ENCODE measurements at regions of chr1 and their contacts with region 1.

Region 1: DNA sequence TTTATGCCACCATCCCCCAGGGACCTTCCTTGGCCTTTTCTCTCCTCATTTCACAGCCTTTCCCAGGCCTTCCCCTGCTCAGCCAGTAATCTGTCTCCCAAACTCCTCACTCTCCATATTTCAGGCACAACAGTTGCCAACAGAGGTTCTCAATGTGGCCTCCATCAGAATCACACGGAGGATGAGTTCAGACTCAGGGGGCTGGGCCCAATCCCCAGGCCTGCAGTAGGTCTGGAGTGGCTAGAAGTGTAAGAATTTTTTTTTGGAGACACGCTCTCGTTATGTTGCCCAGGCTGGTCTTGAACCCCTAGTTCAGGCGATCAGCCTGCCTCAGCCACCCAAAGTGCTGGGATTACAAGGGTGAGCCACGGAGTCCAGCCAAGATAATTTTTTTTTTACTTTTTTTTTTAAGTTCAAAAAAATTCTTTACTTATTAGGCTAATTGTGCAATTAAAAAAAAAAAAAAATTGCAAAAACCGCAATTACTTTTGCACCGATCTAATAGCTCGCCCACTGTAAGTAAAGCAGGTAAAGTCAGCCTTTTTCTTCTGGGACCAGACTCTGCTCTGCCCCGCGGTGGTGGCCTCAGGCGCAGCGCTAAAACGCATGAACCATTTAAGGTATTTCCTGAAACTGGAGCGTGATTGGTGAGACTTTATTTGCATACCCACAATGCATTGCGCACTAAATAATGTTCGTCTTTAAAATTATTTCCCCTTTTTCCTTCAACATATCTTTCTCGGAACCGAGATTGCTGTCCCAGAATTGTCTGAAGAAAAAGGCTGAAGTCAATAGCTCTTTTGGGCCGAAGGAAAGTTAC is 18.7 kb downstream of the KIAA2013 start:
- DNase-seq: peak; percentile 74
- ATAC-seq: peak; percentile 47
- H3K4me3 Mint-ChIP-seq: peak overlapping the region; percentile 94
- H3K27ac Mint-ChIP-seq: peak overlapping the region; percentile 100
- H3K4me1 Mint-ChIP-seq: peaks cover 21% of the 10 kb centered on the region
- H3K27me3 Mint-ChIP-seq: no peaks in the 10 kb centered on the region
- CTCF ChIP-seq: no peak

Region 2: DNA sequence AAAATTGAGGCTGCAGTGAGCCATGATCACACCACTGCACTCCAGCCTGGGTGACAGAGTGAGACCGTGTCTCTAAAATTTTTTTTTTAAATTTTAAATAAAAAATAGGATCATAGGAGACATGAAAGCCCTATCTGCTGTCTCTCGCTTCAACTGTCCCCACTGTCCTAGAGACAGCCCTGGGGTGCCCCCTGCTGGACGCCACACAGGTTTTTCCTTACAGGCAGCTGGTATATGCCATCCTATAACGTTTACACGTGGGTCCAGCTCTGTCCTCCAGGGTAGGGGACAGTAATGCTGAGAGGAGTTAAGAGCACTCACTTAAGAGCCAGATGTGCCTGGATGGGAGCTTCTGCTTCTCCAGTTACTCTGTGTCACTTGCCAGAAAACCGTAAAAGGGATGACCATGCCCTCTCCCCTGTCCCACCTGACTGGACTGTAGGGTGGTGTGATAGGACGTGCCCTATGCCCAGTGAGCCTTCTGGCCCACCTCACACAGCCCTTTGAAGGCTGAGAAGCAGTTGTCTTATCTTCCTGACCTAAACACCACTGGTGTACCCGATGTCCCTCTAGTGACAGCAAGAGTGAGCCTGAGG is 261.7 kb before region 1 on chr1:
- CTCF ChIA-PET with region 1: no interaction called
- POLR2A ChIA-PET with region 1: interaction called, 15 read pairs
- intact Hi-C with region 1: loop called (anchors 5 kb)
- DNase-seq: peak; percentile 66
- ATAC-seq: peak; percentile 48
- H3K4me3 Mint-ChIP-seq: no peak overlapping the region
- H3K27ac Mint-ChIP-seq: no peak overlapping the region
- H3K4me1 Mint-ChIP-seq: peaks cover 15% of the 10 kb centered on the region
- H3K27me3 Mint-ChIP-seq: peaks cover 2% of the 10 kb centered on the region
- CTCF ChIP-seq: no peak

Region 3: GRCh38 chr1:11784993-11785769 is 122.3 kb before region 1 on chr1:
- CTCF ChIA-PET with region 1: no interaction called
- POLR2A ChIA-PET with region 1: interaction called, 17 read pairs
- intact Hi-C with region 1: no loop called
- DNase-seq: peak; percentile 55
- ATAC-seq: peak; percentile 86
- H3K4me3 Mint-ChIP-seq: peak overlapping the region; percentile 44
- H3K27ac Mint-ChIP-seq: peak overlapping the region; percentile 71
- H3K4me1 Mint-ChIP-seq: peaks cover 22% of the 10 kb centered on the region
- H3K27me3 Mint-ChIP-seq: no peaks in the 10 kb centered on the region
- CTCF ChIP-seq: peak; percentile 88

Region 4: DNA sequence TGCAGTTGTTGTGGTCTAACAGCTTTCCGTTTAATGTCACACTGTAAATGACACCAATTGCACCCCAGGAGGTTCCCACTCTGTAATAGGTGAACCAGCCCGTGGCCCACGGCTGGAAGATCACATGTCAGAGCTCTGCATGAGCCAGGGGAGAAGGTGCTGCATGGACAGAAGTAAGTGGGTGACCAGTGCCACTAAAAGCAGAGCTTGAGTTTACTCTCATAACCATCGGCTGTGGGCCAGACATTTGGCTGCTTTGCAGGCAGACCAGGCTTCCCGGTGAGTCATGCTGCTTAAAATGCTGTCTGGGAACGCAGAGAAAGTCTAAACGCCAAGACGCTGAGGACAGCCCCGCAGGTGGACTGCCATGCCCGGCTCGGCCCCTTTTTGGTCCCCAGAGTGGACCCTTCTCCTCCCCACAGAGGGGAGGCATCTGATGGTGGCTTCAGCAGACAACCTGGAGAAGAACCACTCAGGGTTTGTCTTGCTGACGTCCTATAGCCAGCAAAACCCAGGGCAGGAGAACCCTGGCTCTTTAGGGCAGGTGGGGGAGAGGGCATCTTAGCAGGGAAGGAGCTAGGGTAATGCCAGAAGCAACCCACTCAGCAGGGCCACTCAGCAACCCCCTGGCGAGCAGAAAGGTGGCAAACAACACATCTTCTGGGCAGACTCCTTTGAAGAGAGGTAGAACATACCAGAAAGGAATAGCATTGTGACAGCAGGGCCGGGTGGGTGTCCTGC is 11.5 kb after region 1 on chr1:
- CTCF ChIA-PET with region 1: no interaction called
- POLR2A ChIA-PET with region 1: interaction called, 95 read pairs
- intact Hi-C with region 1: no loop called
- DNase-seq: no peak
- ATAC-seq: no peak
- H3K4me3 Mint-ChIP-seq: no peak overlapping the region
- H3K27ac Mint-ChIP-seq: no peak overlapping the region
- H3K4me1 Mint-ChIP-seq: peaks cover 33% of the 10 kb centered on the region
- H3K27me3 Mint-ChIP-seq: no peaks in the 10 kb centered on the region
- CTCF ChIP-seq: no peak

Region 5: GRCh38 chr1:12019858-12020509 is 112.5 kb after region 1 on chr1:
- CTCF ChIA-PET with region 1: interaction called, 3 read pairs
- POLR2A ChIA-PET with region 1: interaction called, 87 read pairs
- intact Hi-C with region 1: loop called (anchors 1 kb)
- DNase-seq: no peak
- ATAC-seq: no peak
- H3K4me3 Mint-ChIP-seq: peak overlapping the region; percentile 88
- H3K27ac Mint-ChIP-seq: peak overlapping the region; percentile 37
- H3K4me1 Mint-ChIP-seq: peaks cover 14% of the 10 kb centered on the region
- H3K27me3 Mint-ChIP-seq: no peaks in the 10 kb centered on the region
- CTCF ChIP-seq: no peak

Region 6: GRCh38 chr1:12143631-12144155 is 236.2 kb after region 1 on chr1:
- CTCF ChIA-PET with region 1: no interaction called
- POLR2A ChIA-PET with region 1: interaction called, 14 read pairs
- intact Hi-C with region 1: no loop called
- DNase-seq: no peak
- ATAC-seq: peak; percentile 72
- H3K4me3 Mint-ChIP-seq: peak overlapping the region; percentile 41
- H3K27ac Mint-ChIP-seq: peak overlapping the region; percentile 79
- H3K4me1 Mint-ChIP-seq: peaks cover 71% of the 10 kb centered on the region
- H3K27me3 Mint-ChIP-seq: no peaks in the 10 kb centered on the region
- CTCF ChIP-seq: no peak

Measured in activated B cell treated with CpG ODN at 0.5 μM for 24 hours (primary cell).